ENCODE measurements at regions of chr11 and their contacts with region 1.

Region 1: GRCh38 chr11:120929664-120930154 is 94.2 kb upstream of the TBCEL start:
- DNase-seq: peak; percentile 30
- ATAC-seq: peak; percentile 86
- H3K4me3 ChIP-seq: no peak overlapping the region
- H3K27ac ChIP-seq: no peak overlapping the region
- H3K4me1 ChIP-seq: no peaks in the 10 kb centered on the region
- H3K27me3 ChIP-seq: no peaks in the 10 kb centered on the region
- CTCF ChIP-seq: peak; percentile 81
- EP300 ChIP-seq: no peak
- POLR2A ChIP-seq: no peak
- RAD21 ChIP-seq: no peak

Region 2: DNA sequence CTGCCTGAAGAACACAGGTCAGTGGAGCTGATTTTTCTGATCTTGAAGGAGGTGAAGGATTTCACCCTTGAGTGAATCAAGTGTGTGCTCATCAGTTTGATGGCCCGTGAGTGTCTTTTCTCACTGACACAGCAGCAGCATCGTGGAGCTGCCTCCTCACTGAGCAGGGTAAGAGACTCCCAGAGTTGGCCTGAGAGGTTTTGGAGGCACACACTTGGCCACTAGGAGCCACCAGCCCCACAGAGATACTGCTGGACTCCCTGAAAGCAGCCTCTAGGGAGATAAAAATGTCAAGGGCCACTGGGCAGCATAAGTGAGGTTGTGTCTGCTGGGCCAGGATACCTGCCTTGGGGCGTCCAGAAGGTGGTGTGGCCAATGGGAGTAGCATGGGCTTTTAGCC is 172.8 kb before region 1 on chr11:
- CTCF ChIA-PET with region 1: no interaction called
- POLR2A ChIA-PET with region 1: no interaction called
- in situ Hi-C with region 1: no loop called
- intact Hi-C with region 1: loop called (anchors 10 kb)
- DNase-seq: peak; percentile 14
- ATAC-seq: peak; percentile 87
- H3K4me3 ChIP-seq: no peak overlapping the region
- H3K27ac ChIP-seq: no peak overlapping the region
- H3K4me1 ChIP-seq: no peaks in the 10 kb centered on the region
- H3K27me3 ChIP-seq: peaks cover 2 to 3% of the 10 kb centered on the region in 2 experiments; a peak in 2 of 5 replicates
- CTCF ChIP-seq: peak; percentile 58
- EP300 ChIP-seq: no peak
- POLR2A ChIP-seq: no peak
- RAD21 ChIP-seq: 0 out of 2 replicates have a peak, but pooled peaks have one; percentile 24

Region 3: DNA sequence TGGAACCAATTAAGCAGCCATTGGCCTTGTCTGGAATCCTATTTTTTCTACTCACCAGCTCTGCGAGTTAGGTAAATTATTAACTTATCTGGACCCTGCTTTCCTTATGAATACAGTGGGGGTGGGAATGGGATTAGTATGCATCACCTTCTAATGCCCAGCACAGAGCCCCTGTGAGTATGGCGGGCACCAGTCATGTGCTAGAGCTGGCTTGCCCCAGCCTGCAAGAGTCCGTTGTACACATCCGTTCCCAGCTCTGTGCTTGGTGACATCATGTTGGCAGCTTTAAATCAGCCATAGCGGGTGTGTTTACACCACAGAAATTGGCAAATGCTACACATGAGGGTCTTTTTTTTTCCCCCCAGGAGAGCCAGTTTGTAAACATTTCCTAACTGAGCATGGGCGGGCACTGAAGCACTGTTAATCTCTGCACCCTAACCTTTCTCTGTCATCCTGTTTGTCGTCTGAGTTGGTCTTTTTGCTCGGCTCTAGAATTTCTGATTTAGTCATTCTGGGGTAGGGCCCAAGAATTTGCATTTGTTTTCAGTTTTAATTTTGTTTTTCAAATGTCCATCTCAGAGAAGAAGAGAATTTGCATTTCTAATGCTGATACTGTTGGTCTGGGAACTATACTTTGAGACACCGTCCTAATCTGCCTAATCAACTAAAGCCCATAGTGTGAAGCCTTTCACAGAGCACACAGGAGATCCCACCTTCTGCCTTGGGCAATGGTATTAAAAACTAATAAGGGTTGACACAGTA is 36.1 kb before region 1 on chr11:
- CTCF ChIA-PET with region 1: no interaction called
- POLR2A ChIA-PET with region 1: no interaction called
- in situ Hi-C with region 1: no loop called
- intact Hi-C with region 1: no loop called
- DNase-seq: peak; percentile 38
- ATAC-seq: peak; percentile 87
- H3K4me3 ChIP-seq: no peak overlapping the region
- H3K27ac ChIP-seq: peak overlapping the region; percentile 19
- H3K4me1 ChIP-seq: peaks cover 29% of the 10 kb centered on the region
- H3K27me3 ChIP-seq: peaks cover 0 to 4% of the 10 kb centered on the region in 2 experiments; a peak in 1 of 5 replicates
- CTCF ChIP-seq: no peak
- EP300 ChIP-seq: no peak
- POLR2A ChIP-seq: no peak
- RAD21 ChIP-seq: no peak

Region 4: GRCh38 chr11:120985718-120986569 is 56.2 kb after region 1 on chr11:
- CTCF ChIA-PET with region 1: no interaction called
- POLR2A ChIA-PET with region 1: no interaction called
- in situ Hi-C with region 1: no loop called
- intact Hi-C with region 1: no loop called
- DNase-seq: peak; percentile 15
- ATAC-seq: peak; percentile 99
- H3K4me3 ChIP-seq: peak overlapping the region; percentile 51 to 61 (median 53)
- H3K27ac ChIP-seq: no peak overlapping the region
- H3K4me1 ChIP-seq: peaks cover 19% of the 10 kb centered on the region
- H3K27me3 ChIP-seq: peaks cover 0 to 31% of the 10 kb centered on the region in 2 experiments; a peak in 4 of 5 replicates
- CTCF ChIP-seq: peak; percentile 29; the same call in 1 of the 2 replicates
- EP300 ChIP-seq: no peak
- POLR2A ChIP-seq: no peak
- RAD21 ChIP-seq: no peak

Region 5: GRCh38 chr11:121194731-121195596 is 265.3 kb after region 1 on chr11:
- CTCF ChIA-PET with region 1: interaction called, 3 read pairs
- POLR2A ChIA-PET with region 1: no interaction called
- in situ Hi-C with region 1: loop called (anchors 10 kb)
- intact Hi-C with region 1: loop called (anchors 1 kb)
- DNase-seq: peak; percentile 59
- ATAC-seq: peak; percentile 92
- H3K4me3 ChIP-seq: no peak overlapping the region
- H3K27ac ChIP-seq: no peak overlapping the region
- H3K4me1 ChIP-seq: no peaks in the 10 kb centered on the region
- H3K27me3 ChIP-seq: peaks cover 0 to 3% of the 10 kb centered on the region in 2 experiments; a peak in 1 of 5 replicates
- CTCF ChIP-seq: peak; percentile 83
- EP300 ChIP-seq: no peak
- POLR2A ChIP-seq: no peak
- RAD21 ChIP-seq: peak; percentile 61; the same call in 1 of the 2 replicates